ENCODE measurements at regions of chr6 and their contacts with region 1.

Region 1: GRCh38 chr6:110682460-110682853 is 132.8 kb downstream of the CDK19 start:
- DNase-seq: no peak

Region 2: DNA sequence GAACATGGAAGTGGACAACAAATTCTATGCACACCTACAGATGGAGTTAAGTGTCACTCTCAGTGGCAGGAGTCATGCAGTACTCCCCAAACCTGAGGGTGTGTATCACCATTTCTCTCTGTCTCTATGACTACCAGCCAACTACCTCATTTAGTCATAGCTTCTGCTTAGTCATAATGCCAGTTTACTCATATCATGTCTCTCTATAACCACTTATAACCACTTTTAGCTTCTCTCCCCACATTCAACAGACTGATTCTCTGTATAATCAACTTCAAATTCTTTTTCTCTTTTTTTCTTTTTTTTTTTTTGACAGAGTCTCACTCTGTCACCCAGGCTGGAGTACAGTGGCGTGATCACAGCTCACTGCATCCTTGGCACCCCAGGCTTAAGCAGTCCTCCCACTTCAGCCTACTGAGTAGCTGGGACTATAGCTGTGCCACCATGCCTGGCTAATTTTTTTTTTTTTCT is 262.3 kb after region 1 on chr6:
- intact Hi-C with region 1: loop called in 1 of 2 experiments (anchors 5 kb)
- DNase-seq: no peak

Region 3: DNA sequence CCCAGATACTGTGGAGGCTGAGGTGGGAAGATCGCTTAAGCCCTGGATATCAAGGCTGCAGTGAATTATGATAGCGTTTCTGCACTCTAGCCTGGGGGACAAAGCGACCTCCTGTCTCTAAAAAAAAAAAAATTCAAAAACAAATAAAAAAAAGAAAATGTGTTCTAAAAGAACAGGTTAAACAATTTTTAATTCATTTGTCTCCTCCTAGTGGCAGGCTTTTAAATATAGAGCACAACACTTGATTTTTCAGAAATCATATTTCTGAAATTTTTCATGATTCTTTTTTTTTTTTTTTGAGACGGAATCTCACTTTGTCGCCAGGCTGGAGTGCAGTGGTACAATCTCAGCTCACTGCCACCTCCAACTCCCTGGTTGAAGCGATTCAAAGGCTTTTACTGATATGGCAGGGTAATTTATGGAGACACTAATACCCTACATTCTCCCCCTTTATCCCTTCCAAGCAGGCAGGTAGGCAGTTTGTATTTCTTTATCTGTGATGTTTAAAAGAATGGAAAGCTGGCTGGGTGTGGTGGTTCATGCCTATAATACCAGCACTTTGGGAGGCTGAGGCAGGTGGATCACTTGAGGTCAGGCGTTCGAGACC is 267.3 kb after region 1 on chr6:
- intact Hi-C with region 1: loop called (anchors 5 kb)
- DNase-seq: no peak